PC-3 (cell line): ENCODE measurements at regions of chr2 and their contacts with region 1.

Region 1: GRCh38 chr2:88680266-88680902 is 11.1 kb upstream of the RPIA start:
- DNase-seq: no peak
- ATAC-seq: no peak
- H3K4me3 ChIP-seq: no peak overlapping the region
- H3K27ac ChIP-seq: no peak overlapping the region
- H3K4me1 ChIP-seq: no peaks in the 10 kb centered on the region
- H3K27me3 ChIP-seq: no peaks in the 10 kb centered on the region
- CTCF ChIP-seq: no peak

Region 2: GRCh38 chr2:88632569-88632968 is 47.8 kb before region 1 on chr2:
- CTCF ChIA-PET with region 1: no interaction called
- POLR2A ChIA-PET with region 1: interaction called, 21 read pairs
- intact Hi-C with region 1: no loop called
- DNase-seq: no peak
- ATAC-seq: no peak
- H3K4me3 ChIP-seq: no peak overlapping the region
- H3K27ac ChIP-seq: no peak overlapping the region
- H3K4me1 ChIP-seq: peaks cover 13% of the 10 kb centered on the region
- H3K27me3 ChIP-seq: no peaks in the 10 kb centered on the region
- CTCF ChIP-seq: no peak